Left colon (tissue), 2 donors: ENCODE measurements at regions of chr1 and their contacts with region 1.

Region 1: GRCh38 chr1:89483010-89483756 is 41.4 kb upstream of the LRRC8B start:
- DNase-seq: peak; percentile 57 to 86
- ATAC-seq: peak; percentile 78

Region 2: GRCh38 chr1:89274411-89274857 is 208.7 kb before region 1 on chr1:
- intact Hi-C with region 1: no loop called
- DNase-seq: no peak
- ATAC-seq: no peak

Region 3: GRCh38 chr1:89429062-89429461 is 54.1 kb before region 1 on chr1:
- intact Hi-C with region 1: no loop called
- DNase-seq: no peak
- ATAC-seq: no peak

Region 4: GRCh38 chr1:89598450-89599331 is 115.5 kb after region 1 on chr1:
- intact Hi-C with region 1: loop called in 1 of 2 experiments (anchors 5 kb)
- DNase-seq: no peak
- ATAC-seq: peak; percentile 87

Region 5: GRCh38 chr1:89762779-89763648 is 279.8 kb after region 1 on chr1:
- intact Hi-C with region 1: loop called in 1 of 2 experiments (anchors 2 kb)
- DNase-seq: peak; percentile 78 to 88
- ATAC-seq: peak; percentile 98